ENCODE measurements at regions of chr7 and their contacts with region 1.

Region 1: GRCh38 chr7:106153891-106154449 is 41.9 kb upstream of the SYPL1 start:
- DNase-seq: peak; percentile 52 to 74 (median 67)
- H3K4me3 ChIP-seq: no peak overlapping the region
- H3K4me3 Mint-ChIP-seq: peak overlapping the region in 1 of 2 donors; percentile 24
- H3K27ac ChIP-seq: no peak overlapping the region
- H3K27ac Mint-ChIP-seq: no peak overlapping the region
- H3K4me1 ChIP-seq: peaks cover 17% of the 10 kb centered on the region in 2 donors
- H3K4me1 Mint-ChIP-seq: peaks cover 25% of the 10 kb centered on the region
- H3K27me3 ChIP-seq: peaks cover 42 to 74% of the 10 kb centered on the region in 2 donors
- H3K27me3 Mint-ChIP-seq: peaks cover 50 to 78% (median 68%) of the 10 kb centered on the region in 3 donors
- CTCF ChIP-seq: peak; percentile 84

Region 2: GRCh38 chr7:106056513-106057203 is 97.3 kb before region 1 on chr7:
- intact Hi-C with region 1: loop called (anchors 2 kb)
- DNase-seq: peak; percentile 49 to 63 (median 53)
- H3K4me3 ChIP-seq: no peak overlapping the region
- H3K4me3 Mint-ChIP-seq: no peak overlapping the region
- H3K27ac ChIP-seq: no peak overlapping the region
- H3K27ac Mint-ChIP-seq: no peak overlapping the region
- H3K4me1 ChIP-seq: peaks cover 15 to 21% of the 10 kb centered on the region in 2 donors
- H3K4me1 Mint-ChIP-seq: peaks cover 34% of the 10 kb centered on the region
- H3K27me3 ChIP-seq: peaks cover 2 to 27% of the 10 kb centered on the region in 2 donors
- H3K27me3 Mint-ChIP-seq: peaks cover 17 to 47% (median 42%) of the 10 kb centered on the region in 3 donors
- CTCF ChIP-seq: peak; percentile 83

Measured in CD14-positive monocyte (primary cell).